PC-9 (cell line): ENCODE measurements at regions of chr18 and their contacts with region 1.

Region 1: GRCh38 chr18:74299746-74300145 is 8.0 kb upstream of the CYB5A start:
- DNase-seq: no peak
- H3K4me3 ChIP-seq: no peak overlapping the region
- H3K27ac ChIP-seq: no peak overlapping the region
- H3K4me1 ChIP-seq: peaks cover 22% of the 10 kb centered on the region
- H3K27me3 ChIP-seq: no peaks in the 10 kb centered on the region
- CTCF ChIP-seq: no peak

Region 2: DNA sequence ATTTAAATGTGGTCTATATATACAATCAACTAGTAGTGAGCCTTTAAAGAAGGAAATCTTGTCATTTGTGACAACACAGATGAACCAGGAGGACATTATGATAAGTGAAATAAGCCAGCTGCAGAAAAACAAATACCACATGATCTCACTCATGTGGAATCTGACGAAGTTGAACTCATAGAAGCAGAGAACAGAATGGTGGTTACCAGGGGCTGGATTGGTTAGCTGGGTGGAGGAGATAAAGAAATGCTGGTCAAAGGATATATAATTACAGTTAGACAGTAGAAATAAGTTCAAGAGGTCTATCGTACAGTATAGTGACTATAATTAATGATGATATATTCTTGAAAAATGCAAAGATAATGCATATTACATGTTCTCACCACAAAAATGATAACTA is 420.0 kb before region 1 on chr18:
- CTCF ChIA-PET with region 1: no interaction called
- POLR2A ChIA-PET with region 1: no interaction called
- intact Hi-C with region 1: no loop called
- DNase-seq: no peak
- H3K4me3 ChIP-seq: no peak overlapping the region
- H3K27ac ChIP-seq: no peak overlapping the region
- H3K4me1 ChIP-seq: peaks cover 13% of the 10 kb centered on the region
- H3K27me3 ChIP-seq: no peaks in the 10 kb centered on the region
- CTCF ChIP-seq: no peak

Region 3: GRCh38 chr18:74284191-74284979 is 15.4 kb before region 1 on chr18:
- CTCF ChIA-PET with region 1: no interaction called
- POLR2A ChIA-PET with region 1: interaction called, 12 read pairs
- intact Hi-C with region 1: no loop called
- DNase-seq: no peak
- H3K4me3 ChIP-seq: no peak overlapping the region
- H3K27ac ChIP-seq: peak overlapping the region; percentile 21; the same call in 1 of the 2 replicates
- H3K4me1 ChIP-seq: peaks cover 86% of the 10 kb centered on the region
- H3K27me3 ChIP-seq: no peaks in the 10 kb centered on the region
- CTCF ChIP-seq: no peak